ENCODE measurements at regions of chr17 and their contacts with region 1.

Region 1: DNA sequence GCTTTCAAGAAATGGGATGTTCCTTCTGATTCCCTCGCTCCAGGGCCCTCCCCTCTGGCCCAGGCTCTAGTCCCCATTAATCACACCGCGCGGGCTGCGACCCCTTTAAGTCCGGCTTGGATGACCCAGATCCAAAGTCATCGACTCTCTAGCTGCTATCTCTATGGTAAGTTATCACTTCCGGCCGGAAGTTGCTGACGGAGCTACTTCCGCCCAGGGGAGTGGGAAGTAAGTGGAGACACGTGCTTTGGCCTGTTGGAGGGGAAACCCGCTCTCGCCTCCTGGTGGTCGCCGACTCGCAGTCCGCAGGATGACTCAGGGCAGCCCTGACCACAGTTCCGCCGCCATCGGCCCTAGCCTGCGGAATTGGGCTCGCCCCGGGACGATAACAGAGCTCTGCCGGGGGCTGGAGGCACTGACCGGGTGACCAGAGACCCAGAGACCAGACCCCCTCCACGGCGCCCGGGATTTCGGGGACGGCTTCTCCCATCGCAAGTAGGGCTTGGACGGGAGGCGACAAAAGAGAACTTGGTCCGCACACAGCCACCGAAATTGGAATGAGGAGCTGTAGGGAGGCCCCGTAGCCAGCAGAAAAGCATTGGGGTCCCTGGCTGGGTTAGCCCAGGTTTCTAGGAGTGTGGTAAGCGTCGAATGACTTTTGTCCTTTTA is 52.2 kb upstream of the SEC14L1 start:
- DNase-seq: peak; percentile 85 to 88
- H3K4me3 ChIP-seq: peak overlapping the region; percentile 81
- H3K27ac ChIP-seq: peak overlapping the region; percentile 72
- H3K4me1 ChIP-seq: peaks cover 4% of the 10 kb centered on the region; the same call in 1 of the 2 replicates
- H3K27me3 ChIP-seq: no peaks in the 10 kb centered on the region
- CTCF ChIP-seq: peak; percentile 50; the same call in 1 of the 2 replicates

Region 2: DNA sequence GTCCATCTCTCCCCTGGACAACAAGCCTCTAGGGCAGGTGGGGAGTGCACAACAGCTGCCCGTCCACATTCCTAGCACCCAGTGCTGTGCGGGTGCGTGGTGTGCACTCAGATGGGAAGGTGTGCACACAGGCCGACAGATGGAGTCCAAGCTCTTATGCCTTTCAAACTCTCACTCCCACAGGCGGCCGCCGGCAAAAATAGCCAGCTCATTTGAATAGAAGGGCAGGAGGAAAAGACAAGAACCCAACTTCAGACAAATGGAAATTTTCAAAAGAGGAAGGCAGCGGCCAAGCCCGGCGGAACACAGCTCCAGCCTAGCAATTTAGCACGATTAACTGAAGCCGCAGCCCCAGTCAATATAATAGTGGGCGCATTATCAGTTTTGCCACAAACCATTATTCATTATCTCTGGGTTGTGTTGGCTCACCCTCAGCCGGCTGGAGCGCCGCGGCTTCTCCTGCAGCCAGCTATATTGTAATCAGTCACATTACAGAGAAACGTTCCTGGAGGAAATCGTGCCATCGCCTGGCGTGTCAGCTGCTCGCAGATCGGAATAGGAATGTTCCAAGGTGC is 51.7 kb before region 1 on chr17:
- CTCF ChIA-PET with region 1: no interaction called
- POLR2A ChIA-PET with region 1: no interaction called
- intact Hi-C with region 1: no loop called
- DNase-seq: peak in 1 of 2 experiments; percentile 45
- H3K4me3 ChIP-seq: no peak overlapping the region
- H3K27ac ChIP-seq: no peak overlapping the region
- H3K4me1 ChIP-seq: no peaks in the 10 kb centered on the region
- H3K27me3 ChIP-seq: peaks cover 4% of the 10 kb centered on the region; the same call in 1 of the 2 replicates
- CTCF ChIP-seq: no peak

Region 3: DNA sequence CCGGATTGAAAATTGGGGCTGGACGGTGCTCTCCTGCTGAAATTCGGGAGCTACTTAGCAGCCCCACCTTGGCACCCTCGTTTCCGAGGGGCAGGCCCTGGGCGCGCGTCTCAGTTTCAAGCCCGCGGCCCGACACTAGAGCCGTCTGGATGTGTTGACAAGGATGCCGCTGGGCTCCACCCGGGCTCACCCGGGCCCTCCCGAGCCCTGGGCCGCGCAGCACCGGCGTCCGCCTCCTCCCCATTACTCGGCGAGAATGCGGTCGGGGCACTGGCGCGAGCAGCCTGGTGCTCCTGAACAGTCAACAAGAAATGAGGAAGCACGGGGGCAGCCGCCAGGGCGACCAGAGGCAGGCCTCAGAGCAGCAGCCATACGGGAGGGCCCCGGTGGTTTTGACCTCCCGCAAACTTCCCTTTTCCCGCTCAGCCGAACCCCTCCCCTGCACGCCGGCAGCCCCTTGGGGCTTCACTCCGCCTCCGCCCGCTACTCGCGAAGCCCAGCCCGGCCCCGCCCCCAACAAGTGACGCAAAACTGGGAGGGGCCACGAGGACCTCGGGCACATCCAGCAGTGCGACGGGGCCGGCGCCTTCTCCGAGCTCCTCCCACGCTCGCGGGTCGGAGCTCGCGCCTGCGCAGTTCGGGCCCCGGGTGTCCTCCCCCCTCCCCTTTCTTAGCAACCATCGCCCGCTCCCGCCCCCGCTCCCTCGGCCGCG is 51.7 kb after region 1 on chr17:
- CTCF ChIA-PET with region 1: interaction called, 13 read pairs
- POLR2A ChIA-PET with region 1: interaction called, 9 read pairs
- intact Hi-C with region 1: loop called (anchors 2 kb)
- DNase-seq: peak; percentile 81 to 98
- H3K4me3 ChIP-seq: peak overlapping the region; percentile 61
- H3K27ac ChIP-seq: peak overlapping the region; percentile 72
- H3K4me1 ChIP-seq: peaks cover 38% of the 10 kb centered on the region
- H3K27me3 ChIP-seq: no peaks in the 10 kb centered on the region
- CTCF ChIP-seq: no peak

Region 4: GRCh38 chr17:77208217-77208808 is 119.7 kb after region 1 on chr17:
- CTCF ChIA-PET with region 1: no interaction called
- POLR2A ChIA-PET with region 1: no interaction called
- intact Hi-C with region 1: loop called (anchors 10 kb)
- DNase-seq: no peak
- H3K4me3 ChIP-seq: no peak overlapping the region
- H3K27ac ChIP-seq: no peak overlapping the region
- H3K4me1 ChIP-seq: no peaks in the 10 kb centered on the region
- H3K27me3 ChIP-seq: no peaks in the 10 kb centered on the region
- CTCF ChIP-seq: no peak

Region 5: GRCh38 chr17:77319211-77320043 is 230.8 kb after region 1 on chr17:
- CTCF ChIA-PET with region 1: no interaction called
- POLR2A ChIA-PET with region 1: no interaction called
- intact Hi-C with region 1: loop called (anchors 5 kb)
- DNase-seq: peak; percentile 83 to 88
- H3K4me3 ChIP-seq: peak overlapping the region; percentile 82
- H3K27ac ChIP-seq: peak overlapping the region; percentile 95
- H3K4me1 ChIP-seq: peaks cover 25% of the 10 kb centered on the region
- H3K27me3 ChIP-seq: no peaks in the 10 kb centered on the region
- CTCF ChIP-seq: no peak